Testis (tissue), 5 donors: ENCODE measurements at regions of chr9 and their contacts with region 1.

Region 1: DNA sequence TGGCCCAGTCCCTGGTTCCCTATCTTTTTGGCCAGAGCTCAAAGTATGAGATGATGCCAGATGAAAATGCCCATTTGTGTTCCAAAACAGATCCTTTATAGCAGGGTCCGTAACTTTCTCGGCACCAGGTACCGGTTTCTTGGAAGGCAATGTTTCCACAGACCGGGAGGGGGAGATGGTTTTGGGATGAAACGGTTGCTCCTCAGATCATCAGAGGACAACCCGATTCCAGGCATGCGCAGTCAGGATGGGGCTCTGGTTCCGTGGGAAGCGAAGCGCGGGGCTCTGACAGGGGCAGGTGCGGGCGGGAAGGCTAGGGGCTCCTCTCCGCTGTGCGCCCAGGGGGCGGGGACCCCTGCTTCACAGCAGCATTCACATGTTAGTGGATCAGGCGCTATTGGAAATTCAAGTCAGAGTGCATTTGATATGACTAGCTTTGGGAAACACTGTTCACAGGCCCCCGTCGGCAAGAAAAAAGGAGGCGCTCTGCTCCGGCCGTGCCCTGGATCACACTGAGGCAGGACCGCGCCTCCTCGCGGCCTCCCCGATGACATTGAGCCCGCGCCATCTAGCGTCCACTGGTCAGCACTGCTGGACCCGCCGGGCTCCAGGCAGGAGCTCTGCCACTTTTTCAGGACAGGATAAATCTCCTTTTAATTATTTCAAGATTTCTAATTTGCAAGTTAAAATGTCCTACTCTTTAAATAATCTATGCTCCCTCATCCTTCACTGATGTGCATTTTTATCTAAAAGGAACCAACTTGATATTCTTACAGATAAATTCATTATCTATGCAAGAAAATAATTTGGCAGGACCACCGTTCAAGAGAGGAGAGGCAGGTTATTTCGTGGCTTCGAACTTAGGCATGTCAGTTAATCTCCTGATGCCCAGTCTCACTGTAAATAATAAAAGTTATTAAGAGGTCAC is 190.0 kb downstream of the FANCC start:
- DNase-seq: peak; percentile 94
- H3K4me3 ChIP-seq: peak overlapping the region; percentile 31 to 37
- H3K27ac ChIP-seq: peak overlapping the region; percentile 34 to 65
- H3K4me1 ChIP-seq: peaks cover 20% of the 10 kb centered on the region
- H3K27me3 ChIP-seq: no peaks in the 10 kb centered on the region
- CTCF ChIP-seq: peak; percentile 91 to 93 (median 92)
- POLR2A ChIP-seq: no peak

Region 2: GRCh38 chr9:94675008-94675881 is 452.3 kb before region 1 on chr9:
- intact Hi-C with region 1: loop called (anchors 5 kb)
- DNase-seq: no peak
- H3K4me3 ChIP-seq: no peak overlapping the region
- H3K27ac ChIP-seq: no peak overlapping the region
- H3K4me1 ChIP-seq: peaks cover 5% of the 10 kb centered on the region
- H3K27me3 ChIP-seq: no peaks in the 10 kb centered on the region
- CTCF ChIP-seq: no peak
- POLR2A ChIP-seq: no peak

Region 3: GRCh38 chr9:94783102-94783664 is 344.3 kb before region 1 on chr9:
- intact Hi-C with region 1: loop called (anchors 10 kb)
- DNase-seq: peak; percentile 87
- H3K4me3 ChIP-seq: no peak overlapping the region
- H3K27ac ChIP-seq: no peak overlapping the region
- H3K4me1 ChIP-seq: peaks cover 6% of the 10 kb centered on the region
- H3K27me3 ChIP-seq: no peaks in the 10 kb centered on the region
- CTCF ChIP-seq: peak; percentile 37 to 58 (median 45)
- POLR2A ChIP-seq: no peak

Region 4: GRCh38 chr9:94839398-94839797 is 288.1 kb before region 1 on chr9:
- intact Hi-C with region 1: no loop called
- DNase-seq: no peak
- H3K4me3 ChIP-seq: no peak overlapping the region
- H3K27ac ChIP-seq: no peak overlapping the region
- H3K4me1 ChIP-seq: no peaks in the 10 kb centered on the region
- H3K27me3 ChIP-seq: no peaks in the 10 kb centered on the region
- CTCF ChIP-seq: no peak
- POLR2A ChIP-seq: no peak